Activated CD8-positive, alpha-beta T cell treated with anti-CD3 and anti-CD28 coated beads for 36 hours (primary cell): ENCODE measurements at regions of chr2 and their contacts with region 1.

Region 1: GRCh38 chr2:54899576-54900200 is 150.6 kb downstream of the RTN4 start:
- DNase-seq: no peak
- ATAC-seq: no peak
- H3K4me3 Mint-ChIP-seq: no peak overlapping the region
- H3K27ac Mint-ChIP-seq: no peak overlapping the region
- H3K4me1 Mint-ChIP-seq: peaks cover 17% of the 10 kb centered on the region
- H3K27me3 Mint-ChIP-seq: no peaks in the 10 kb centered on the region
- CTCF ChIP-seq: peak; percentile 48

Region 2: DNA sequence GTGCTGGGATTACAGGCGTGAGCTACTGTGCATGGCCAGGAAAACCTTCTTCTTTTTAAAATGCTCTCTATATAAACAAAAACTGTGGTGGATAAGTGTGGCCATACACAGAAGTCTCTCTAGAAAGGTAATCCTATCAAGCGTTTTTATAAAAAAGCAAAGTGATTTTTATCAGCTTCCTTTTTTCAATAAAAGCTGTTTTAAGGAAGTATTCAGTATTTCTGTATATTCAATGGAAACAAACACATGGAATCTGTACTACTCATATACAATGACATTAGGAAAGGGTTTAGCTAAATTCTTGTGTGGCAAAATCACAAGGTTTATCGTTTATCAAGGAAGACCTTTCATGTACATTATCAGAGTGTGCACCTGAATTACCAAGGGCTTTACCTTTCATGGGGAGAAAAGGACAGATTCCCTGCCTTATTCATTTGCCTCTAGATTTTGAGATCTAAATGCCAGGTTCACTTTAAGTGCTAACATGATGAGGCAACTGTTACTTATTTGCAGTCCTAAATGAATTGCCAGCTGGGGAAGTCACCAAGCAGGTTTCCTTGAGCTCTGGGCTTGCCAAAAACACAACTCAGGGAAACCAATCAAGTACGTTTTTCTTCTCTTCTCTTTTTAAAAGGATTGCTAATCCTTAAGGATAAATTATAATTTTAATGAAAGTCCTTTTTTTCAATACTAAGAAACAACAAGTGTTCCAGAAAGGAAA is 79.8 kb after region 1 on chr2:
- CTCF ChIA-PET with region 1: no interaction called
- POLR2A ChIA-PET with region 1: no interaction called
- intact Hi-C with region 1: loop called (anchors 10 kb)
- DNase-seq: no peak
- ATAC-seq: no peak
- H3K4me3 Mint-ChIP-seq: no peak overlapping the region
- H3K27ac Mint-ChIP-seq: no peak overlapping the region
- H3K4me1 Mint-ChIP-seq: peaks cover 46% of the 10 kb centered on the region
- H3K27me3 Mint-ChIP-seq: no peaks in the 10 kb centered on the region
- CTCF ChIP-seq: no peak

Region 3: DNA sequence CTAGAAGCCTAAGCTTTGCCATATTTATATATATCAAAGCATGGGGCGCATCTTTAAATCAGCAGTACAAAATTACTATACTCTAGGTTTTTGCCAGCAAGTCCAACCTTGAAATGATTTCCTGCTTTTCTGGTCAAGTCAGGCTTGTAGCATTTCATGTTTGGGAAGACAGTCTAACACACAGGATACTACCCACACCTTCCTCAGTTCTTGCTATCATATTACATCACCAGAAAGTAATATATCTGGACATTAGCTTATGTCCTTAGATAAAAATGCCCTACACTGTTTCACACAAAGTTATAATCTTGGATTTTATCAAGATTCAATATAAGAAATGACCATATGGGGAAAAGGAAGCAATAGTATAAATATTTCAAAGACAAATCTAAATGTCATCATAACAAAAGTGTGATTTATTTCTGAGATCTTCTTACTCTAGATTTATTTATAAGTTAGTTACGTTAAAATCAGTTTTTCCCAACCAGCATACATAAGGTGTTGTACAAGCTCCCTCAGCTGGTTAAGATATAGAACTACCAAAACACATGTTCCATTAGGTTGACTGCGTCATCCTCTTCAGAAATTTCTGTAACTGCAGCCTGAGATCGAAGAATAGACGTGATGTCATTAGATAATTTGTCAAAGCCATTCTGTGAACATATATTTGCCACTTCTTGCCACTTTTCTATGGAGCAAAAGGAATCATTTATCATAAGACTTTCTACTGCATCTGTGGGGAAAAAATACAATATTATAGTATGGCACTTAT is 275.8 kb after region 1 on chr2:
- CTCF ChIA-PET with region 1: interaction called, 26 read pairs
- POLR2A ChIA-PET with region 1: no interaction called
- intact Hi-C with region 1: no loop called
- DNase-seq: no peak
- ATAC-seq: peak; percentile 88
- H3K4me3 Mint-ChIP-seq: no peak overlapping the region
- H3K27ac Mint-ChIP-seq: no peak overlapping the region
- H3K4me1 Mint-ChIP-seq: peaks cover 8% of the 10 kb centered on the region
- H3K27me3 Mint-ChIP-seq: no peaks in the 10 kb centered on the region
- CTCF ChIP-seq: peak; percentile 71